MCF 10A (cell line): ENCODE measurements at regions of chr20 and their contacts with region 1.

Region 1: GRCh38 chr20:37564388-37565133 is 36.9 kb upstream of the BLCAP start:
- DNase-seq: peak; percentile 42
- H3K4me3 Mint-ChIP-seq: no peak overlapping the region
- H3K27ac Mint-ChIP-seq: no peak overlapping the region
- H3K4me1 Mint-ChIP-seq: no peaks in the 10 kb centered on the region
- H3K27me3 Mint-ChIP-seq: peaks cover 61% of the 10 kb centered on the region
- CTCF ChIP-seq: peak; percentile 98

Region 2: DNA sequence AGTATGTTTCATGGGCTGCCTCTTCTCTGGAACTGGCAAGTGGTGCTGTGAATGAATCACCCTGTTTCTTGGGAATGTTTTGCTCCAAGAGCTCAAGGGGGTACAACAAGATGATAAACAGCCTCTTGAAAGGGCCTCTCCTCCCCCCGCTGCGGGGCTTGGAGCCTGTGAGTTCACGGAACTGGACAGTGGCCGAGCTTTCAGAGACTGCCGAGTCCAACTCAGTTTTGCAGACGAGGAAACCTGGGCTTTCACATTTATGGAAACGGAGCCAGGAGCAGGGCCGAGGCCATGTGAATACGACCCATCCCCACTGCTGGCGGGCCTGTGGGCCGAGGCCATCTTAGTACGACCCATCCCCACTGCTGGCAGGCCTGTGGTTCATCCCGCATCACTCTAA is 236.8 kb before region 1 on chr20:
- CTCF ChIA-PET with region 1: no interaction called
- POLR2A ChIA-PET with region 1: no interaction called
- intact Hi-C with region 1: no loop called
- DNase-seq: no peak
- H3K4me3 Mint-ChIP-seq: no peak overlapping the region
- H3K27ac Mint-ChIP-seq: no peak overlapping the region
- H3K4me1 Mint-ChIP-seq: peaks cover 11% of the 10 kb centered on the region
- H3K27me3 Mint-ChIP-seq: no peaks in the 10 kb centered on the region
- CTCF ChIP-seq: no peak

Region 3: GRCh38 chr20:37579106-37579505 is 14.5 kb after region 1 on chr20:
- CTCF ChIA-PET with region 1: interaction called, 12 read pairs
- POLR2A ChIA-PET with region 1: no interaction called
- intact Hi-C with region 1: no loop called
- DNase-seq: no peak
- H3K4me3 Mint-ChIP-seq: no peak overlapping the region
- H3K27ac Mint-ChIP-seq: no peak overlapping the region
- H3K4me1 Mint-ChIP-seq: no peaks in the 10 kb centered on the region
- H3K27me3 Mint-ChIP-seq: peaks cover 76% of the 10 kb centered on the region
- CTCF ChIP-seq: no peak

Region 4: GRCh38 chr20:37823286-37823980 is 258.9 kb after region 1 on chr20:
- CTCF ChIA-PET with region 1: no interaction called
- POLR2A ChIA-PET with region 1: no interaction called
- intact Hi-C with region 1: no loop called
- DNase-seq: no peak
- H3K4me3 Mint-ChIP-seq: no peak overlapping the region
- H3K27ac Mint-ChIP-seq: no peak overlapping the region
- H3K4me1 Mint-ChIP-seq: no peaks in the 10 kb centered on the region
- H3K27me3 Mint-ChIP-seq: no peaks in the 10 kb centered on the region
- CTCF ChIP-seq: no peak

Region 5: GRCh38 chr20:37901654-37902503 is 337.3 kb after region 1 on chr20:
- CTCF ChIA-PET with region 1: no interaction called
- POLR2A ChIA-PET with region 1: no interaction called
- intact Hi-C with region 1: loop called (anchors 10 kb)
- DNase-seq: peak; percentile 81
- H3K4me3 Mint-ChIP-seq: peak overlapping the region; percentile 86
- H3K27ac Mint-ChIP-seq: no peak overlapping the region
- H3K4me1 Mint-ChIP-seq: peaks cover 33% of the 10 kb centered on the region
- H3K27me3 Mint-ChIP-seq: no peaks in the 10 kb centered on the region
- CTCF ChIP-seq: peak; percentile 45

Region 6: GRCh38 chr20:37990571-37991151 is 426.1 kb after region 1 on chr20:
- CTCF ChIA-PET with region 1: interaction called, 35 read pairs
- POLR2A ChIA-PET with region 1: interaction called, 5 read pairs
- intact Hi-C with region 1: loop called (anchors 2 kb)
- DNase-seq: peak; percentile 50
- H3K4me3 Mint-ChIP-seq: peak overlapping the region; percentile 40
- H3K27ac Mint-ChIP-seq: peak overlapping the region; percentile 83
- H3K4me1 Mint-ChIP-seq: peaks cover 76% of the 10 kb centered on the region
- H3K27me3 Mint-ChIP-seq: no peaks in the 10 kb centered on the region
- CTCF ChIP-seq: no peak

Region 7: DNA sequence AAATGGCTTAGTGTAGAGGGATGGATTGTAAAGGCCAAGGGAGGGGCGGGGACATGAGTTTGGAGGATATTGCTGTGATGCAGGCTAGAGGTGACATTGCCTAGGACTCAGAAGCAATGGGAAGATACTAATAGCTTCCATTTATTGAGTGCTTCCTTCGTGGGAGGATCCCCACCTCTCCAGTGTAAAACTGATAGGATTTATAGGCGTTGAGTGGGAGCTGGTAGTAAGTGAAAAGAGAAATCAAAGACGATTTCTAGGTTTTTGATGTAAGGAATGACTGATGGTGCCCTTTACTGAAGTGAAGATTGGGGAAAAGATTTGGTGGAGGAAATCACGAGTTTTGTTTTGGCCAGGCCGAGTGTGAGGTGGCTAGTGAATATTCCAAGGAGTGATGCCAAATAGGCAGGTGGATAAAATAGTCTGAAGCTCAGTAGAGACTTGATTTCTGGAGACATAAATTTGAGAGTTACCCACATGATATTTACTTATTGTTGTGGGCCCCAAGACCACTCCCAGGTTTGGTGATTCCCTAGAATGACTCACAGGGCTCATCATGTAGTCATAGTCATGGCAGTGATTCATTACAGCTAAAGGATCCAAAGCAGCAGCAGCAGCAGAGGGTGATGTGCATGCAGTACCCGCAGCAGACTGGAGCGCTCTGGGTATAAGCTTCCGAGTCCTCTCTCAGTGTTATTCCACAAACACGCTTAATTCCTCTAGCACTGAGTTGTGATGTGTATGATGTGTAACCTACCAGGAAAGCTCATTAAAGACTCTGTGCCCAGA is 479.1 kb after region 1 on chr20:
- CTCF ChIA-PET with region 1: interaction called, 11 read pairs
- POLR2A ChIA-PET with region 1: no interaction called
- intact Hi-C with region 1: no loop called
- DNase-seq: peak; percentile 85
- H3K4me3 Mint-ChIP-seq: no peak overlapping the region
- H3K27ac Mint-ChIP-seq: peak overlapping the region; percentile 88
- H3K4me1 Mint-ChIP-seq: peaks cover 19% of the 10 kb centered on the region
- H3K27me3 Mint-ChIP-seq: no peaks in the 10 kb centered on the region
- CTCF ChIP-seq: no peak

Region 8: DNA sequence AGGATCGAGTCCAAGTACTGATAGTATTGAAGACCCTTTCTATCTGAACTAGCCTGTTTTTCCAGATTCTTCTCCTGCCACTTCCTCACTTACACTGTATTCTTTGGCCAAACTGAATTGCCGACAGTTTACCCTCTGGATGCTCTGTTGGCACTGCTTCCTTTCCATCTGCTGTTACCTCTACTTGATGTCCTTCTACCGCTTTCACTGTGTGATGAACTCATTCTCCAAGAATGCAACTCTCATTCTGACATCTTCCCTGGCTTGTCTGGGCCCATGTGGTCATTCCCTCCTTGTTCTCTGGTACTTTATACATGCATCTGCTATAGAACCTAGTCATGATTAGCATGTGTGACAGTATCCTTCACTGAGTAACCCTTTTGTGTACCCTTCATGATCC is 485.2 kb after region 1 on chr20:
- CTCF ChIA-PET with region 1: interaction called, 25 read pairs
- POLR2A ChIA-PET with region 1: no interaction called
- intact Hi-C with region 1: no loop called
- DNase-seq: peak; percentile 39
- H3K4me3 Mint-ChIP-seq: no peak overlapping the region
- H3K27ac Mint-ChIP-seq: peak overlapping the region; percentile 1
- H3K4me1 Mint-ChIP-seq: peaks cover 21% of the 10 kb centered on the region
- H3K27me3 Mint-ChIP-seq: no peaks in the 10 kb centered on the region
- CTCF ChIP-seq: no peak

Region 9: DNA sequence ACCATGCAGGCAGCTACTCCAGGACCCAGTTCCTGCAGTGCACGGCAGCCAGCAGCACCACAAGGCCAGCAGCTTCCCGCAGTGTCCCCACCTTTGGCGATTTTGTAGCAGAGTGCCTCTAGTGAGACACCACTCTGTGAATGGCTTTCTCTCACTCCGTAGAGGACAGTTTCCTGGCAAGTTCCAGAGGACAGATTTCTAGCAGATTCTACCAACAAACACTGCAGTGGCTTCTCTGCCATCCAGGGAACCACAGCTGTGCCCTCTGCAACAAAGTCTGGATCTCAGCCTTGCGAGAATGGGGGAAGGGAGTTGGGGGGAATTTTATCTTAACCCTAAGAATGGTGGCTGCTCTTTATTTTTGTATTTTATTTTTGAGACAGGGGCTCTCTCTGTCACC is 841.9 kb after region 1 on chr20:
- CTCF ChIA-PET with region 1: no interaction called
- POLR2A ChIA-PET with region 1: no interaction called
- intact Hi-C with region 1: loop called (anchors 5 kb)
- DNase-seq: no peak
- H3K4me3 Mint-ChIP-seq: no peak overlapping the region
- H3K27ac Mint-ChIP-seq: no peak overlapping the region
- H3K4me1 Mint-ChIP-seq: no peaks in the 10 kb centered on the region
- H3K27me3 Mint-ChIP-seq: no peaks in the 10 kb centered on the region
- CTCF ChIP-seq: no peak